ENCODE measurements at regions of chr5 and their contacts with region 1.

Region 1: GRCh38 chr5:87008751-87009560 is 258.7 kb upstream of the RASA1 start:
- DNase-seq: no peak

Region 2: DNA sequence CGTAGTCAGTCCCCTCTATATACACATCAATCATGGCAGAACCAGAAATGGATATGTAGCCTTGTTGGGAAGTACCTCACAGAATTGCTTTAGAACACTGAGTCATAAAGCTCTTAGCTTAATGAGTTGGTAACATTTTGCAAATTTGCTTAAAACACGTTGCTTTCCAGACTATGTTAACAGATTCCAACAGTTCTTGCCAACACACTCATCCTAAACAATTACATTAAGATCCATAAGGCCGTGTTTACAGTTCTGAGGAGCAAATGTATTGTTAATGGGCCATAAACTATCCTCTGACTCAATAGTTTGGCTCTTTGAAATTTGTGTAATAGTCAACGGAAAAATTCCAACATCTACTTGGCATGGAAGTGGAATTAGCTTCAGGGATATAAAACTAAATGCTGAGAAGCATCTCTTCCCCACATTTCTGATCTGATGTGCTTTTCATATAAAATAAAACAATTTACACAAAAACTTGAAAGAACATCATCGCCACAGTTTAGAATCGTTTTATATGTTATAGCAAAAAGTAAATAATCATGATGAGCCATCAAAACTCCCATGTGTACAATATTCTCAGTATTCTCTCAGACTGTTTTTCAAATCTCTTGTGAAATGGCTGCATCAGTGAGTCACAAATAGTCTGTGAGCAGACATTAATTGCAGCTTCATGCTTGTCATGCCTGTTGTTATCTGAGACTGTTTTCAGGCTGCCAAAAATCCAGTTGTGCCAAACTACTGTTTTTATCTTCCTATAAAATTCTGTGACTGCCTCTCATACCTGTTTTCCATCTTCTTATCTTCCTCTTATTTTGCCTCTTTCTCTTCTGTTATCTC is 99.3 kb before region 1 on chr5:
- intact Hi-C with region 1: no loop called
- DNase-seq: no peak

Region 3: GRCh38 chr5:86926033-86926432 is 82.9 kb before region 1 on chr5:
- intact Hi-C with region 1: no loop called
- DNase-seq: no peak

Region 4: DNA sequence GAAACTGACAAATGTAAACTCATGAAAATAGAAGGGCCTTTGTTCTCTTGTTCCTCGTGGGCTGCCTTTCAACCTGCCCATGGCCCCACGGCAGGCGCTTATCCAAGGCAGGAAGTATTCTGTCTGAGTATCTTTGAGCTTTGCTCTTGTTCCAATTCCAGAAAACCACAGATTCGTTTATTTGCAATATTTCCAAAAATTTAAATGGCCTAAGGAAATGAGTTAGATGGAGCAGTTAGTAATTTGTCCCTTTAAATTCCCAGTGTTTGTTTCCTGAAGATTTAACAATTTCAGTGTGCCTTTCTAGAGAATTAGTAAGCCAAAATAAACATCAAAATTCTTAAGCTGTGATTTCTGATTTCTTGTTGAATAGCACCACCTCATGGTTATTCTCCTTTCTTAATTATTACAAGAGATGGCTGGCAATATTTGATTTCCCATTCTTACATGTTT is 40.6 kb before region 1 on chr5:
- intact Hi-C with region 1: loop called (anchors 2 kb)
- DNase-seq: peak in 7 of 10 donors; percentile 8 to 77 (median 26)

Region 5: DNA sequence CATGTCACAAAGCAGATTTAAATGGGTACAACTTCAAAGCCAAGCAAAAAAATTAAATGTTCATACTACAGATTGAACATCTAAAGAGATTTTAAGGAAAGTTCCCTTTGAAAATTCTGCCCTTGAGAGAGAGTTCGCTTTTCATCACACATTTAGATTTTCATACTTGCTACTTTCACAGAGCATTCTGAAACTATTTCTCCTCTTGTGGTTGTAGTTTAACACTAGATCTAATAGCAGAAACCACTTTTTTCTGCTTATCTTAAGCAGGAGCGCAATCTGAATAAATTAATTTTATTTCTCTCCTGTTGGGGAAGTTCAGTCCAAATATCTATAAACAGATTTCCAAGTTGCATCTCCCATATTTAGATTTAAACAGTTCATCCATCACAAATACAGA is 85.4 kb after region 1 on chr5:
- intact Hi-C with region 1: no loop called
- DNase-seq: no peak

Measured in posterior cingulate gyrus (tissue), 11 donors.